ENCODE measurements at regions of chr2 and their contacts with region 1.

Region 1: GRCh38 chr2:85538486-85539360 is at the start of gene MAT2A:
- DNase-seq: peak; percentile 80
- H3K4me3 ChIP-seq: peak within 1 kb of the TSS; percentile 100
- H3K27ac ChIP-seq: peak within 1 kb of the TSS; percentile 99
- H3K27me3 ChIP-seq: no peaks in the 10 kb centered on the region
- CTCF ChIP-seq: peak; percentile 80
- polyA plus RNA-seq, gene MAT2A: 362 and 409 TPM in 2 replicates

Region 2: GRCh38 chr2:85022232-85022631 is 516.5 kb before region 1 on chr2:
- CTCF ChIA-PET with region 1: no interaction called
- POLR2A ChIA-PET with region 1: no interaction called
- DNase-seq: no peak
- H3K4me3 ChIP-seq: no peak overlapping the region
- H3K27ac ChIP-seq: no peak overlapping the region
- H3K27me3 ChIP-seq: no peaks in the 10 kb centered on the region
- CTCF ChIP-seq: no peak

Region 3: GRCh38 chr2:85288244-85288725 is 250.4 kb before region 1 on chr2:
- CTCF ChIA-PET with region 1: no interaction called
- POLR2A ChIA-PET with region 1: interaction called, 10 read pairs
- DNase-seq: no peak
- H3K4me3 ChIP-seq: no peak overlapping the region
- H3K27ac ChIP-seq: peak overlapping the region; percentile 47
- H3K27me3 ChIP-seq: no peaks in the 10 kb centered on the region
- CTCF ChIP-seq: no peak

Region 4: GRCh38 chr2:85420536-85421259 is 118.0 kb before region 1 on chr2:
- CTCF ChIA-PET with region 1: interaction called, 13 read pairs
- POLR2A ChIA-PET with region 1: interaction called, 115 read pairs
- DNase-seq: no peak
- H3K4me3 ChIP-seq: no peak overlapping the region; the same call in 1 of the 2 replicates
- H3K27ac ChIP-seq: peak overlapping the region; percentile 83
- H3K27me3 ChIP-seq: no peaks in the 10 kb centered on the region
- CTCF ChIP-seq: peak; percentile 97

Region 5: DNA sequence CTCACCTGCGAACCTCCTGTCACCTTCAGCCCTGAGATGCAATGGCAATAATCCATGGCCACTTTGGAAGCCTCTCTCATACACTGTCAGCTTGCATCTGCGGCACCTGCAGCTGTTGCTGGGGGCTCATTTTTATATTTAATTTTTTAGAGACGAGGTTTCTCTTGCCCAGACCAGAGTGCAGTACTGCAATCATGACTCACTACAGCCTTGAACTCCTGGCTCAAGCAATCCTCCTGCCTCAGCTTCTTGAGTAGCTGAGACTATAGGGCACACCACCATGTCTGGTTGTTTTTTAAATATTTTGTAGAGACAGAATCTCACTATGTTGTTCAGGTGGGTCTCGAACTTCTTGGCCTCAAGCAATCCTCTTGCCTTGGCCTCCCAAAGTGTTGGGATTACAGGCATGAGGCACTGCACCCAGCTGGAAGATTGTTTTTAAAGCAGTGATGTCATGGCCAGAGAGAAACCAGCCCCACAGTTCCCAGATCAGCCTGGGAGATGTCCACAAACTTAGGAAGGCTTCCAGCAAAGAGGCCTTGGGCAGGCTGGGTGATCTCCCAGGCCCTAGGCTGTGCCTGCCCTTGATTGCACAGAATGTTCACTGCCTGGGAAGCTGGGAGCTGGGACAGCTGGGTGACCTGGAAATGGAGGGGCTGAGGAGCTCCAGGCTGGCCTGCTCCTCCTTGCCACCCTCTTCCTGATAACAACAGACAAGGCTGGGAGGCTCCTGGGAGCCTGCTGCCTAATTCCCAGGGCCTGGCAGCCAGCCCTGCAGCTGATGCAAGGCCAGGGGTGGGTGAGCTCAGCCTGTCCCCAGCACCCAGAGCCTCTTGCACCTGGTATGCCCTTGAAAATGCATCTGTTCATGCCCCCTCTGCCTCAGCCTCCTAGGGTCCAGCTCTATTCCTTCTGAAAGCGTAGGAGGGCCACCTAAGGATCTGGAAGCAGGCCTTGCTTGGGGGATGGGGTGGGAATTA is 93.1 kb before region 1 on chr2:
- CTCF ChIA-PET with region 1: interaction called, 4 read pairs
- POLR2A ChIA-PET with region 1: interaction called, 20 read pairs
- DNase-seq: peak; percentile 50
- H3K4me3 ChIP-seq: no peak overlapping the region
- H3K27ac ChIP-seq: peak overlapping the region; percentile 96
- H3K27me3 ChIP-seq: no peaks in the 10 kb centered on the region
- CTCF ChIP-seq: no peak

Region 6: GRCh38 chr2:85511008-85511811 is 27.5 kb before region 1 on chr2:
- CTCF ChIA-PET with region 1: interaction called, 8 read pairs
- POLR2A ChIA-PET with region 1: interaction called, 96 read pairs
- DNase-seq: no peak
- H3K4me3 ChIP-seq: no peak overlapping the region
- H3K27ac ChIP-seq: no peak overlapping the region
- H3K27me3 ChIP-seq: no peaks in the 10 kb centered on the region
- CTCF ChIP-seq: no peak

Region 7: DNA sequence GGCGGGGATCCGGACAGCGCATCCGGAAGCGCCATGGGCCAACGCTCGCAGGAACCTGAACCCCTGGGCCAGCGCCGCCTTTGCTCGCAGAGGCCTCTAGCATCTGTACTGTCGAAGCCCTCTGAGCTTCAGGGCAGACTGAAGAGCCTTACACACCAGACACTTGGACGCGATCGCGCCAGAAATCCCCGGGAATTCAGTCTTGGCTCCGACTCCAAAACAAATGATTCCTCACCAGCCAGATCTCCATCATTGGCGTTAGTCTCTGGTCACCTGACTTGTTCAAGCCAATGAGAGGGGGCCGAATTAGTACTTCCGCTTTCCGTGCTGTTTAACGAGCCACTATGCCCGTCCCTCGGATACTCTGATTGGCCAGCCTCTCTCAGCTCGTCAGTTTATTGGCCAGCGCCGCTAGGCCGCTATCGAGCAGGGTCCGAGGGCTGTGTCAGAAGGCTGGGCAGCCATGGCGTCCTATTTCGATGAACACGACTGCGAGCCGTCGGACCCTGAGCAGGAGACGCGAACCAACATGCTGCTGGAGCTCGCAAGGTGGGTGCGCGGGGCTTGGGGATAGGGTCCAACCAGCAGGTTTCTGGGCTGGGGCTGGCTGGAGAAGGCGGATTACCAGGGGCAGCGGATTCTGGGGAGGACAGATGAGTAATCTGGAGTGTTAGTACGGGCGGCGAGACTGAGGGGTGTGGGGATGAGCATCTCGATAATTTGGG is 56.7 kb after region 1 on chr2 and contains the start of gene RNF181:
- CTCF ChIA-PET with region 1: no interaction called
- POLR2A ChIA-PET with region 1: interaction called, 20 read pairs
- DNase-seq: peak; percentile 97
- H3K4me3 ChIP-seq: peak within 1 kb of the TSS; percentile 99
- H3K27ac ChIP-seq: peak within 1 kb of the TSS; percentile 92
- H3K27me3 ChIP-seq: no peaks in the 10 kb centered on the region
- CTCF ChIP-seq: no peak
- polyA plus RNA-seq, gene RNF181: 260 and 351 TPM in 2 replicates